Common myeloid progenitor, CD34-positive (primary cell): ENCODE measurements at regions of chr1 and their contacts with region 1.

Region 1: DNA sequence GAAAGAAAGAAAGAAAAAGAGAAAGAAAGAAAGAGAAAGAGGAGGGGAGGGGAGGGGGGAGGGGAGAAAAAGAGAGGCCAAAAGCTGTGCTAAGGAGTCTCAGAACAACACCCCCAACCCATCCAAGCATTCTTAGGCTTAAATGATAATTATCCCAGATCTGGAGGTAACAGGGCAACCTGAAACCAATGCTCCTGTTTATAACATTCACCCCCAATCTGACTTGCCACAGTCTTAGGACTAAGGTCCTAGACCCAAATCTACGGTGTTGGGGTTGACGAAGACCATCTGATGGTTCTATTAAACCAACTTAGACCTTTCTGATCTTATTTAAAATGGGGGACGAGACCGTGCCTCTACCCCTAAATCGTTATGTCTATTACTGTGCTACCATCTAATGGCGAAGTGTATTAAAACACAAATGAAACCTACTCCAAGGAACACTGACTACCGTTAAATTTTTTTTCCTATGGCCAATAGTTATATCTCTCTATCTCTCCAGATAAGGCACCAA is 119.3 kb upstream of the CDC42BPA start:
- DNase-seq: peak; percentile 77 to 88 (median 86)
- H3K4me3 ChIP-seq: peak overlapping the region in 6 of 7 experiments; percentile 19 to 81 (median 58)
- H3K27ac ChIP-seq: no peak overlapping the region
- H3K4me1 ChIP-seq: peaks cover 0 to 14% (median 8%) of the 10 kb centered on the region in 4 experiments
- H3K27me3 ChIP-seq: peaks cover 0 to 3% (median 0%) of the 10 kb centered on the region in 5 experiments

Region 2: GRCh38 chr1:227449051-227449450 is 11.5 kb after region 1 on chr1:
- CTCF ChIA-PET with region 1: interaction called, 16 read pairs
- POLR2A ChIA-PET with region 1: interaction called, 3 read pairs
- DNase-seq: peak in 2 of 3 donors; percentile 40 to 47
- H3K4me3 ChIP-seq: no peak overlapping the region
- H3K27ac ChIP-seq: no peak overlapping the region
- H3K4me1 ChIP-seq: no peaks in the 10 kb centered on the region
- H3K27me3 ChIP-seq: no peaks in the 10 kb centered on the region

Region 3: DNA sequence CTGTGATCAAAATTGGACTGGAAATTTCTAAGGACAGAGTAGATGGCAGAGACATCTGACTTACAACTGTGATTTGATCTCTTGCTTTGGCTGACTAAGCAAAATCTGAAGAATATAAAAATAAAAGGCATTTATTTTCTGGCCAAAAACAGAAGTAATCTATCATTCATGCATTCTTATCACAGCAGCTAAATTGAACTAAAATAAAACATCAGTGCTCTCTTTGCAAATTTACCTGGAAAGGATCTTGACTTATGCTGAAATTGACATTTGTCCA is 44.4 kb after region 1 on chr1:
- CTCF ChIA-PET with region 1: no interaction called
- POLR2A ChIA-PET with region 1: no interaction called
- DNase-seq: no peak
- H3K4me3 ChIP-seq: no peak overlapping the region
- H3K27ac ChIP-seq: no peak overlapping the region
- H3K4me1 ChIP-seq: no peaks in the 10 kb centered on the region
- H3K27me3 ChIP-seq: peaks cover 0 to 3% (median 2%) of the 10 kb centered on the region in 5 experiments